Activated naive CD8-positive, alpha-beta T cell treated with anti-CD3 and anti-CD28 coated beads, Interleukin-2, amount 10 ng/mL, durations not matched to agents 7 days and 5 days (primary cell): ENCODE measurements at regions of chr17 and their contacts with region 1.

Region 1: GRCh38 chr17:80791758-80792284 is 199.8 kb upstream of the CHMP6 start:
- DNase-seq: no peak
- ATAC-seq: no peak
- H3K4me3 Mint-ChIP-seq: peak overlapping the region; percentile 76
- H3K27ac Mint-ChIP-seq: peak overlapping the region; percentile 97
- H3K4me1 Mint-ChIP-seq: peaks cover 56% of the 10 kb centered on the region
- H3K27me3 Mint-ChIP-seq: no peaks in the 10 kb centered on the region

Region 2: DNA sequence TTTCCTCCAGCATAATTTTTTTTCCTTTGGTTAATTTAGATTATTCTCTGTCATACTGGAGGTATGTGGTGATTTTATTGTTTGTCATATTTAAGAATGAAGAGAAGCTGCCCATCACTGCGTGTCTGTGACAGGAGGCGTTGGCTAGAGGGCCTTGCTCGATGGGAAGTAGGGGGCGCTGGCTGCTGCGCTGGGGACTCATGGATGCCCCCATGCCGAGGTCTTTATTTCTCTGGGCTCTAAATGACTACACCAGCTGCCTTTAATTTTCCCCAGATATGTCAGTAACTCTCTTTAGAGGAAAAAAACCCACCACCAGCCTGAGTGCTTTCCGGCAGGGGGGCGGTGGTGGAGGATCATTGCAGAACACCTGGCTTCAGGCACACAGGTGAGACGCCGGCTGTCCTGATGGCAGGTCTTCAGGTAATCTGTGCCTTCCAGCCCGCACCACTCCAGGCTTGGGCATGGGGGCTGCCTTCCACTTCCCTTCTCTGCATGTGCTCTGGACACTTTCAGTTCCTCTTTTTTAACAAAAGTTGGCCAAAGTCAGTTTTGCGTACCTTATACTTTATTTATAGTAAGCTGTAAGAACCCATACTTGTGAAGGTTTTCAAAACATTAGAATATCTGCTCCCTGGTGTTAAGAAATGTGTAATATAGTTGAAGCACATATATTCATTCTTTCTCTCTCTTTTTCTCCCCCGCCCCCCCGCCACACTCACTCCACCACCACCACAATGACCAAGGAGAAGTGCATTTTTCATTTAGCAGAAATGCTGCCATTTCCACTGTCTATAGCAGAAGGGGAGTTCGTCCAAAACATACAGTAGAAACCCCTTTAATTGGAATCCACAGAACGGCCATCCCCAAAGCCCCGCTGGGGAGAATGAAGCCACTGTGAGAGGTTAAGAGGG is 54.5 kb before region 1 on chr17:
- POLR2A ChIA-PET with region 1: no interaction called
- DNase-seq: no peak
- ATAC-seq: no peak
- H3K4me3 Mint-ChIP-seq: no peak overlapping the region
- H3K27ac Mint-ChIP-seq: no peak overlapping the region
- H3K4me1 Mint-ChIP-seq: peaks cover 43% of the 10 kb centered on the region
- H3K27me3 Mint-ChIP-seq: no peaks in the 10 kb centered on the region

Region 3: DNA sequence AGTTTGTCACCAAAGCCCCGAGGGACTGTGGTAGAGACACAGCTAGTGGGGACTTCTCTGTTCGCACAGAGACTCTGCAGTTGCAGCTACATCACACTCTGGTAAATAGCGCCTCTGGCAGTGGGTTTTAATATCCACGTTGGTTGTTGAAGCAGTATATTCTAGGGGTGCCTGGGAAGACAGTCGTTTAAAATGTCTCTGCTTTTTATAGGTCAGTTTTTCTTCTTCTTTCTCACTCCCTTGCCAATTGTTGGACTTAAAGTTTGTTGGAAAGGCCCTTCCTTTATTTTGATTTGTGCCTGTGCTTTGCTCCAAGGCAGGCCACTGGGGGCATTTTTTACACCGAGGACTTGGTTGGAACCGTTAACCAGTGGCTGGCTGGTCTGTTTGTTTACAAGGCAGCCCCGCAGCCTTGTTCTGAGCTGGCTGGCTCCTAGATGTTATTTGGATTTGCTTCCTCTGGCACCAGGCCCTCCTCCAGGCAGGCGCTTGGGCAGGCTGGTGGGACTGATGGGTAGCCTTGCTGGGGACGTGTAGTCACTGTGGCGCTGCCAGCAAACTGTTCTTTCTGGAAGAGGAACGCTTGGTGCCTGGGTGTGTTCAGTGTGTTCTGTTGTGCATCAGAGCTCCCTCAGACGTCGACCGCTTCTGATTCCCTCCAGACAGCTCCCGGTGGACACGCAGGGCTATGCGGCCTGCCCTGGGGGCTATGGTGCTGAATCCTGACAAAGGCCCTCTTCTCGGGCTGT is 18.4 kb before region 1 on chr17:
- POLR2A ChIA-PET with region 1: interaction called, 84 read pairs
- DNase-seq: no peak
- ATAC-seq: no peak
- H3K4me3 Mint-ChIP-seq: no peak overlapping the region
- H3K27ac Mint-ChIP-seq: peak overlapping the region; percentile 94
- H3K4me1 Mint-ChIP-seq: peaks cover 57% of the 10 kb centered on the region
- H3K27me3 Mint-ChIP-seq: no peaks in the 10 kb centered on the region

Region 4: DNA sequence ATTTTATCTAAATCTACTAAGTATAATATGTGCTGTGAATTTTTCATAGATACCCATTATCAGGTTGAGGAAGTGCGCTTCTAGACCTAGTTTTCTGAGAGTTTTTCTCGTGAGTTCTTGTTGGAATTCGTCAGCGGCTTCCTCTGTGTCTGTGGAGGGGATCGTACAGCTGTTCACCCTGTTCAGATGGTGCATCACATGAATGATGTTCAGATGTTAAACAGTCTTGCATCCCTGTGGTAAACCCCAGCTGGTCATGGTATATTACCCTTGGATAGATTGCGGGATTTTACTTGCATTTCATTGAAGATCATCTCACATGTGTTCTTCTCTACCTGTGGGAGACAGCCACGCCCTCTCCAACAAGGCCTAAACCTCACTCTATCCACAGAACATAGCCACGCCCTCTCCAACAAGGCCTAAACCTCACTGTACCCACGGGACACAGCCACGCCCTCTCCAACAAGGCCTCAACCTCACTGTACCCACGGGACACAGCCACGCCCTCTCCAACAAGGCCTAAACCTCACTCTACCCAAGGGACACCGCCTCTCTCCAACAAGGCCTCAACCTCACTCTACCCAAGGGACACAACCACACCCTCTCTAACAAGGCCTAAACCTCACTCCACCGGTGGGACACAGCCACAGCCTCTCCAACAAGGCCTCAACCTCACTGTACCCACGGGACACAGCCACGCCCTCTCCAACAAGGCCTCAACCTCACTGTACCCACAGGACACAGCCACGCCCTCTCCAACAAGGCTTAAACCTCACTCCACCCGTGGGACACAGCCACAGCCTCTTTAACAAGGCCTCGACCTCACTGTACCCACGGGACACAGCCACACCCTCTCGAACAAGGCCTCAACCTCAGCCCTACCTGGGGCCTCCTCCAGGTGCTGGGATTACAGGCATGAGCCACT is 19.6 kb after region 1 on chr17:
- POLR2A ChIA-PET with region 1: interaction called, 10 read pairs
- DNase-seq: peak; percentile 53
- ATAC-seq: peak; percentile 78
- H3K4me3 Mint-ChIP-seq: peak overlapping the region; percentile 36
- H3K27ac Mint-ChIP-seq: peak overlapping the region; percentile 90
- H3K4me1 Mint-ChIP-seq: peaks cover 41% of the 10 kb centered on the region
- H3K27me3 Mint-ChIP-seq: no peaks in the 10 kb centered on the region

Region 5: DNA sequence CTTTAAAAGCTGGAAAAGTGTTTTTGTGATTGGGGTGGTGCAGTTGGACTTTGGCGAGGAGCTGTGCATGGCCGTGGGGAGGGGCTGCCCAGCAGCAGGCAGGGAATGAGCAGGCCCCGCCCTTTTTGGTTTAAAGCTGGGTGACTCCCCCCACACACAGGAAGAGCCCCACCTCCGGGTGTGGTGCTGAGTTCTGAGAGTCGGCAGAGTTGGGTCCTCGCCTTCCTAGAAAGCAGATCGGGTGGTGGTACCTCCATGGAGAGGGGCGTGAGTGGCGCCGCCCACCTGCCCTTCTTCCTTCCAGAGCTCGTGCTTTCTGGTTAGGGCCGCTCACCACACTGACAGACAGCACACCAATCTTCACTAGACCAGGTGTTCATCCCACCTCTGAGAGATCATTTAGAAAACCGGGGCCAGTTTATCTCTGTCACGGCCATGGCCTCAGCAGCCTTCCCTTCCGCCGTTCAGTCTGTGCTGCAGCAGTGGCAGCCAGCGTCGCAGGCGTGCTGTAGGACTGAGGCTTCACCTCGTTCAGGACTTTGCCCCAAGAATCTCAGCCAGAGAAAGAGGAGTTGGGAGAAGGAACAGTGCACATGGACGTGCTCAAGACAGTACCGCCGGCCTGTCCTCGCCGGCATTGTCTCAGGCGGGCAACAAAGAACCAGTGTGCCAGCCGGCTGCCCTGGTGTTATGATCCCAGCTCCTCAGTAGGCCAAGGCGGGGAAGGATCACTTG is 55.8 kb after region 1 on chr17:
- POLR2A ChIA-PET with region 1: interaction called, 19 read pairs
- DNase-seq: peak; percentile 80
- ATAC-seq: peak; percentile 96
- H3K4me3 Mint-ChIP-seq: peak overlapping the region; percentile 68
- H3K27ac Mint-ChIP-seq: peak overlapping the region; percentile 87
- H3K4me1 Mint-ChIP-seq: peaks cover 50% of the 10 kb centered on the region
- H3K27me3 Mint-ChIP-seq: no peaks in the 10 kb centered on the region

Region 6: DNA sequence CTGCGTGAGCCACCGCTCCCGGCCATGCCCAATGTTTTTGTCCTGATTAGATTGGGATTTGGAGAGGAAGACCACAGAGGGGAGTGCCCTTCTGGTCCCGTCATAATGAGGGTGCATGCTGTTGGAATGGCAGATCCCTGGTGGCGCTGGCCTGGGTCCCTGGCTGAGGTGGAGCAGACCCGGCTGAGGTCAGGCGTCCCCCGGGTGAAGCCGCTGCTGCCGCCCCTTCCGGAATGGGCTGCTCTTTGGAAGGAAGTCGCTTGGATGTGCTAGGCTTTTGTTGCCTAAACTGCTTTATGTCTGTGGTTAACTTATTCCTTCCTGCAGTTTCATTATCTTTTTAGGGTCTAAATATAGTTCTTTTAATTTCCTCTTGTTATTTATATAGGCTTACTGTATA is 79.5 kb after region 1 on chr17:
- POLR2A ChIA-PET with region 1: no interaction called
- DNase-seq: peak; percentile 58
- ATAC-seq: peak; percentile 59
- H3K4me3 Mint-ChIP-seq: peak overlapping the region; percentile 68
- H3K27ac Mint-ChIP-seq: peak overlapping the region; percentile 80
- H3K4me1 Mint-ChIP-seq: peaks cover 63% of the 10 kb centered on the region
- H3K27me3 Mint-ChIP-seq: no peaks in the 10 kb centered on the region